CD4-positive, alpha-beta memory T cell (primary cell): ENCODE measurements at regions of chr12 and their contacts with region 1.

Region 1: GRCh38 chr12:118061011-118061875 is at the start of gene WSB2:
- DNase-seq: peak; percentile 34 to 57 (median 42)
- H3K4me3 ChIP-seq: peak within 1 kb of the TSS; percentile 84 to 96
- H3K4me3 Mint-ChIP-seq: peak within 1 kb of the TSS; percentile 92 to 98 (median 96)
- H3K27ac ChIP-seq: peak within 1 kb of the TSS; percentile 81
- H3K27ac Mint-ChIP-seq: peak within 1 kb of the TSS; percentile 92 to 97 (median 96)
- H3K4me1 ChIP-seq: peaks cover 53% of the 10 kb centered on the region
- H3K4me1 Mint-ChIP-seq: peaks cover 26 to 66% (median 46%) of the 10 kb centered on the region in 4 donors
- H3K27me3 ChIP-seq: no peaks in the 10 kb centered on the region
- H3K27me3 Mint-ChIP-seq: no peaks in the 10 kb centered on the region
- total RNA-seq, gene WSB2: 24.4 to 31.5 TPM

Region 2: GRCh38 chr12:118016424-118017264 is 44.6 kb before region 1 on chr12 and contains the start of gene RFC5:
- CTCF ChIA-PET with region 1: interaction called, 5 read pairs
- POLR2A ChIA-PET with region 1: interaction called, 12 read pairs
- intact Hi-C with region 1: loop called (anchors 1 kb)
- DNase-seq: peak; percentile 95 to 96 (median 96)
- H3K4me3 ChIP-seq: peak within 1 kb of the TSS; percentile 9 to 92
- H3K4me3 Mint-ChIP-seq: peak within 1 kb of the TSS; percentile 90 to 97 (median 91)
- H3K27ac ChIP-seq: peak within 1 kb of the TSS; percentile 66
- H3K27ac Mint-ChIP-seq: peak within 1 kb of the TSS; percentile 87 to 98 (median 90)
- H3K4me1 ChIP-seq: peaks cover 15% of the 10 kb centered on the region
- H3K4me1 Mint-ChIP-seq: peaks cover 12 to 23% (median 17%) of the 10 kb centered on the region in 4 donors
- H3K27me3 ChIP-seq: no peaks in the 10 kb centered on the region
- H3K27me3 Mint-ChIP-seq: peaks cover 0 to 1% of the 10 kb centered on the region in 2 donors
- total RNA-seq, gene RFC5: 17.2 TPM

Region 3: GRCh38 chr12:119198421-119198820 is 1137.2 kb after region 1 on chr12:
- CTCF ChIA-PET with region 1: no interaction called
- POLR2A ChIA-PET with region 1: no interaction called
- intact Hi-C with region 1: no loop called
- DNase-seq: no peak
- H3K4me3 ChIP-seq: no peak overlapping the region
- H3K4me3 Mint-ChIP-seq: no peak overlapping the region
- H3K27ac ChIP-seq: no peak overlapping the region
- H3K27ac Mint-ChIP-seq: no peak overlapping the region
- H3K4me1 ChIP-seq: no peaks in the 10 kb centered on the region
- H3K4me1 Mint-ChIP-seq: no peaks in the 10 kb centered on the region
- H3K27me3 ChIP-seq: no peaks in the 10 kb centered on the region
- H3K27me3 Mint-ChIP-seq: peaks cover 0 to 1% of the 10 kb centered on the region in 2 donors